Adrenal gland (tissue), 19 donors: ENCODE measurements at regions of chr17 and their contacts with region 1.

Region 1: DNA sequence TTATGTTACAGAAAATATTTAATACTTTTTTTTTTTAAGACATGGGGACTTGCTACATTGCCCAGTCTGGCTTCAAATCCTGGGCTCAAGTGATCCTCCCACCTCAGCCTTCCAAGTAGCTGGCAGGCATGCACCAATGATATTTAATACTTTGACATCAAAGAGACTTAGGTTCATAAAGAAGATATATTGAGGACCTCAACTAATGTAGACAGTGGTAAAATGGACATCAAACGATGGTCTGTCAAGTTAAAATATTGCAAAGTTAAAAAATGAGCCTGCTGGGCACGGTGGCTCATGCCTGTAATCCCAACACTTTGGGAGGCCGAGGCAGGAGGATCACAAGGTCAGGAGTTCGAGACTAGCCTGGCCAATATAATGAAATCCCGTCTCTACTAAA is 8.7 kb downstream of the TEFM start:
- DNase-seq: no peak
- H3K4me3 ChIP-seq: no peak overlapping the region
- H3K27ac ChIP-seq: no peak overlapping the region
- H3K4me1 ChIP-seq: no peaks in the 10 kb centered on the region
- H3K27me3 ChIP-seq: no peaks in the 10 kb centered on the region
- CTCF ChIP-seq: no peak
- POLR2A ChIP-seq: no peak

Region 2: DNA sequence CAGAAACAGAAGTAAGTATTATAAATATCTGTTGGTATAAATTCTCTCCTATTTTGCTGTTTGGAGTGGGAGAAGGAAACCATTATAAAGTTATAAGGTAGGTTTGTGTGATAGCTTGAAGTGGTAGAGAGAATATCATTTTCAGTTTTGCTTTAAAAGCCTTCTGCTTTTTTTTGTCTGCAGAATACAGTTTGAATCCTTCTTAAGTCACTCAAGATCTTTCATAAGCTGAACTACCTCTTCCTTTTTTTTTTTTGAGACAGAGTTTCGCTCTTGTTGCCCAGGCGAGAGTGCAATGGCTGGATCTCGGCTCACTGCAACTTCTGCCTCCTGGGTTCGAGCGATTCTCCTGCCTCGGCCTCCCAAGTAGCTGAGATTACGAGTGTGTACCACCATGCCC is 56.5 kb before region 1 on chr17:
- intact Hi-C with region 1: loop called in 1 of 2 experiments (anchors 5 kb)
- DNase-seq: no peak
- H3K4me3 ChIP-seq: no peak overlapping the region
- H3K27ac ChIP-seq: peak overlapping the region in 2 of 5 donors; percentile 34 to 35
- H3K4me1 ChIP-seq: no peaks in the 10 kb centered on the region
- H3K27me3 ChIP-seq: no peaks in the 10 kb centered on the region
- CTCF ChIP-seq: no peak
- POLR2A ChIP-seq: no peak